ENCODE measurements at regions of chr6 and their contacts with region 1.

Region 1: GRCh38 chr6:7389451-7390225 is at the starts of genes CAGE1 and RIOK1:
- DNase-seq: peak; percentile 85 to 98
- H3K4me3 ChIP-seq: peak within 1 kb of the TSS; percentile 87 to 88
- H3K27ac ChIP-seq: peak within 1 kb of the TSS; percentile 91 to 92
- H3K4me1 ChIP-seq: peaks cover 0 to 8% of the 10 kb centered on the region in 2 donors
- H3K27me3 ChIP-seq: no peaks in the 10 kb centered on the region
- CTCF ChIP-seq: peak in 1 of 3 experiments; percentile 10
- total RNA-seq, gene CAGE1: not detected
- total RNA-seq, gene RIOK1: 4.9 TPM

Region 2: DNA sequence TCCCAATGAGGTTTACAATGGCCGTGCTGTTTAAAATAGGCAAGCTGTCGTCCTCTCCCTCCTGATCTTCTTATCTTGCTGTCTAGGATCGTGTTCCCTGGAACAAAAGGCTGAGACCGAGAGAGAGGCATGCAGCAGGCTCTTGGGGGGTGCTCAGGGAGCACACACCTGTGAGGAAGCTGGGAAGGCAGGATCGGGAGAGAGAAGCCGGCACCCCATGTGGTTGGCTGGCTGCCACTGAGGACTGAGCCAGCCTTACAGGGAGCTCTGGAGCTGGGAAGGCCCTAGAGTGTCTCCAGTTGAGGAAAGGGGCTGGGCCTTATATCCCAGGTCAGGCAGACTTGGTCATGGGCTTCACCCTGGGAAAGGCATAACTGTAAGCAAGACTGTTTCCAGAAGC is 616.9 kb before region 1 on chr6:
- intact Hi-C with region 1: no loop called
- DNase-seq: no peak
- H3K4me3 ChIP-seq: no peak overlapping the region
- H3K27ac ChIP-seq: no peak overlapping the region
- H3K4me1 ChIP-seq: no peaks in the 10 kb centered on the region
- H3K27me3 ChIP-seq: no peaks in the 10 kb centered on the region
- CTCF ChIP-seq: no peak

Region 3: DNA sequence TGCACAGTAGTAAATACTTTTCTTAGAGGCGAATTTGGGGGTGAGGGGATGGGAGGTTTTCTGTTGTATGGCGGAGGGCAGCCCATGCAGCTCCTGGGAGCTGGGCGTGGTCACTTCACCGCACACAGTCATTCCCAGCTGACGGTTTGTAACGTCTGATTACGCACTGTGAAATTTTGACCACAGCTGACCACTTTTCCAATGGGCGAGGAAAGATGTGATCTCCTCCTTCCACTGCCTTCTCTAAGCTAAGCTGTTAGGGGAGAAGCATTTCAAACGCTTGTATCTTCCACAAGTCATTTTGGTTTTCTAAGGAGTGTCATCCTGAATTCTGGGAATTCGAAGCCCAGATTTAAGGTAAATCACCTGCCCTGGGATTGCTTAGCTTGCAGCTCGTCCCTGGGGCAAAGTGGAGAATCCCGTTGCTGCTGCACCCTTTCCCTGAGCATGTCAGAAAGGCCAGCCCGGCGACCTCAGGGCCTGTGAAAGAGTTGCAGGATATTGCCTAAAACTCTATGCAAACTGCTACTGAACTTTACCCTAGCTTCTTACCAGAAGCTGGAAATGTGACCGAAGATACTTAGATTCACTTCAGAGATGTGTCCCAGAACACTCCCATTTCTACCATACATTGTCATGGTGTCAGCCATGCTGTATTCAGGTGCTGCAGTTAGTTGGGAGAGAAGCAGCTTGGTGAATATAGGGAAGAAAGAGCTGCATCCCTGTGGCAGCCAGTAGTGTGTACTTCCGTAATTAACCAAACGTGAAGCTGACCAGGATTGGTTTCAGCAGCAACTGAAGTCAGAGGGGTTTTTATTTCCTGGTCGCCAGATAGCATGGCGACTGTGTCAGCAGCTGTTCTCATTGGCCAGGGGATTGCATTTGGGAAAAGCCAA is 223.0 kb before region 1 on chr6:
- intact Hi-C with region 1: no loop called
- DNase-seq: no peak
- H3K4me3 ChIP-seq: no peak overlapping the region
- H3K27ac ChIP-seq: no peak overlapping the region
- H3K4me1 ChIP-seq: peaks cover 13 to 35% of the 10 kb centered on the region in 2 donors
- H3K27me3 ChIP-seq: no peaks in the 10 kb centered on the region
- CTCF ChIP-seq: no peak

Region 4: DNA sequence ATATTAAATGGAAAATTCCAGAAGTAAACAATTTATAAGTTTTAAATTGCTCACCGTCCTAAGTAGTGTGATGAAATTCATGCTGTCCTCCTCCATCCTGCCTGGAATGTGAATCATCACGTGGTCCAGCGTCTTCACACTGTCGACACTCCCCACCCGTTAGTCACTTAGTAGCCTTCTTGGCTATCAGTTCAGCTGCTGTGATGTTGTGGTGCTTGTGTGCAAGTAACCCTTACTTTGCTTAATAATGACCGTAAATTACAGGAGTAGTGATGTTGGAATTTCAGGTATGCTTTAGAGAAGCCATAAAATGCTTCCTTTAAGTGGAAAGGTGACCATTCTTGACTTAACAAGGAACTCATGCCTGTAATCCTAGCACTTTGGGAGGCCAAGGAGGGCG is 25.2 kb after region 1 on chr6:
- intact Hi-C with region 1: no loop called
- DNase-seq: no peak
- H3K4me3 ChIP-seq: no peak overlapping the region
- H3K27ac ChIP-seq: no peak overlapping the region
- H3K4me1 ChIP-seq: no peaks in the 10 kb centered on the region
- H3K27me3 ChIP-seq: no peaks in the 10 kb centered on the region
- CTCF ChIP-seq: no peak

Region 5: GRCh38 chr6:7589949-7590917 is 200.6 kb after region 1 on chr6 and contains the start of gene SNRNP48:
- intact Hi-C with region 1: loop called (anchors 1 kb)
- DNase-seq: peak; percentile 86 to 97
- H3K4me3 ChIP-seq: peak within 1 kb of the TSS; percentile 92 to 94
- H3K27ac ChIP-seq: peak within 1 kb of the TSS; percentile 57 to 58
- H3K4me1 ChIP-seq: peaks cover 0 to 13% of the 10 kb centered on the region in 2 donors
- H3K27me3 ChIP-seq: no peaks in the 10 kb centered on the region
- CTCF ChIP-seq: peak in 1 of 3 experiments; percentile 9
- total RNA-seq, gene SNRNP48: 1.3 TPM

Region 6: GRCh38 chr6:7615611-7616383 is 226.2 kb after region 1 on chr6:
- intact Hi-C with region 1: no loop called
- DNase-seq: no peak
- H3K4me3 ChIP-seq: peak overlapping the region in 1 of 2 donors; percentile 5
- H3K27ac ChIP-seq: no peak overlapping the region
- H3K4me1 ChIP-seq: no peaks in the 10 kb centered on the region
- H3K27me3 ChIP-seq: no peaks in the 10 kb centered on the region
- CTCF ChIP-seq: peak; percentile 41 to 76 (median 58)

Measured in ascending aorta (tissue), 2 donors.